ENCODE measurements at regions of chr1 and their contacts with region 1.

Region 1: GRCh38 chr1:192808518-192809306 is at the start of gene RGS2:
- DNase-seq: no peak
- H3K4me3 ChIP-seq: peak within 1 kb of the TSS; percentile 91 to 98 (median 92)
- H3K27ac ChIP-seq: peak within 1 kb of the TSS; percentile 86
- H3K4me1 ChIP-seq: peaks cover 27% of the 10 kb centered on the region
- H3K27me3 ChIP-seq: no peaks in the 10 kb centered on the region
- CTCF ChIP-seq: peak in 1 of 3 experiments; percentile 48
- polyA plus RNA-seq, gene RGS2: 10.9 to 146 TPM (median 128 TPM) in 3 replicates

Region 2: GRCh38 chr1:193019442-193020026 is 210.8 kb after region 1 on chr1:
- dilution Hi-C with region 1: loop called (anchors 25 kb)
- DNase-seq: peak; percentile 11
- H3K4me3 ChIP-seq: no peak overlapping the region
- H3K27ac ChIP-seq: no peak overlapping the region
- H3K4me1 ChIP-seq: no peaks in the 10 kb centered on the region
- H3K27me3 ChIP-seq: no peaks in the 10 kb centered on the region
- CTCF ChIP-seq: peak in 2 of 3 experiments; percentile 22 to 35

Region 3: DNA sequence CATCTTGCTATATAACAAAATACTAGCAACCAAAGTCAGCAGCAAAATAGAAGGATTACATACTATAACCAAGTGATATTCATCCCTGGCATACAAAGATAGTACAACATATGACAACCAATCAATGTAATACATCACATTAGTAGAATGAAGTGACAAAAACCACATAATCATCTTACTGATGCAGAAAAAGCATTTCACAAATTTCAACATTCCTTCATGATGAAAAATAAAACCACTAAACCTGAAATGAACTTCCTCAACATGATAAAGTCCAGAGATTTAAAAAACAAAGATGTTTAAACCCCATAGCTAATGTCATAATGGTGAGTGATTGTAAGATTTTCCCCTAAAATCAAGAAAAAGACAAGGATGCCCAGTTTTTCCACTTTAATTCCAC is 269.3 kb after region 1 on chr1:
- dilution Hi-C with region 1: no loop called
- DNase-seq: no peak
- H3K4me3 ChIP-seq: no peak overlapping the region
- H3K27ac ChIP-seq: no peak overlapping the region
- H3K4me1 ChIP-seq: no peaks in the 10 kb centered on the region
- H3K27me3 ChIP-seq: no peaks in the 10 kb centered on the region
- CTCF ChIP-seq: no peak

Measured in keratinocyte (primary cell).